ENCODE measurements at regions of chr2 and their contacts with region 1.

Region 1: GRCh38 chr2:160406591-160407392 is 86.8 kb downstream of the RBMS1 start:
- DNase-seq: peak; percentile 82
- ATAC-seq: peak; percentile 66
- H3K4me3 Mint-ChIP-seq: peak overlapping the region; percentile 89
- H3K27ac Mint-ChIP-seq: peak overlapping the region; percentile 85
- H3K4me1 Mint-ChIP-seq: peaks cover 76% of the 10 kb centered on the region
- H3K27me3 Mint-ChIP-seq: no peaks in the 10 kb centered on the region

Region 2: GRCh38 chr2:160087854-160088745 is 318.7 kb before region 1 on chr2:
- CTCF ChIA-PET with region 1: no interaction called
- POLR2A ChIA-PET with region 1: no interaction called
- DNase-seq: no peak
- ATAC-seq: no peak
- H3K4me3 Mint-ChIP-seq: no peak overlapping the region
- H3K27ac Mint-ChIP-seq: no peak overlapping the region
- H3K4me1 Mint-ChIP-seq: no peaks in the 10 kb centered on the region
- H3K27me3 Mint-ChIP-seq: no peaks in the 10 kb centered on the region

Region 3: DNA sequence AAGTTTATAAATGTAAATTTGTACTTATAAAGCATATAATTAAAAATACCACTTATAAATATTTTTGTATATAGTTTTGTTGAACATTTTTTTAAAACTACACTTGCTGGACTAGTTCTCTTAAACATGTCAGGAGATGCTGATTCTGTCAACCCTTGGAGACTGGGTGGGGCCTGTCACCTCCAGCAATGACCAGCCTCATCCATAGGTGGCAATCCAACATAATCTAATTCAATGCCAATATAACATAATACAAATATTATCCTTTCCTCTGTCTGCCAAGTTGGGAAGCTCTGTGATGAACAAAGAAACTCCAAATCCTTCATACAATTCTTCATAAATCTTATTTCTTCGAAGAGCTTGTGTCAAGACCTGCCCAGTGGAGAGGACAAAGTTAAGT is 53.6 kb before region 1 on chr2:
- CTCF ChIA-PET with region 1: interaction called, 14 read pairs
- POLR2A ChIA-PET with region 1: no interaction called
- DNase-seq: peak; percentile 47
- ATAC-seq: peak; percentile 61
- H3K4me3 Mint-ChIP-seq: no peak overlapping the region
- H3K27ac Mint-ChIP-seq: no peak overlapping the region
- H3K4me1 Mint-ChIP-seq: peaks cover 33% of the 10 kb centered on the region
- H3K27me3 Mint-ChIP-seq: no peaks in the 10 kb centered on the region

Region 4: GRCh38 chr2:160437273-160437672 is 30.5 kb after region 1 on chr2:
- CTCF ChIA-PET with region 1: no interaction called
- POLR2A ChIA-PET with region 1: no interaction called
- DNase-seq: no peak
- ATAC-seq: no peak
- H3K4me3 Mint-ChIP-seq: no peak overlapping the region
- H3K27ac Mint-ChIP-seq: no peak overlapping the region
- H3K4me1 Mint-ChIP-seq: peaks cover 24% of the 10 kb centered on the region
- H3K27me3 Mint-ChIP-seq: no peaks in the 10 kb centered on the region

Region 5: GRCh38 chr2:160541745-160542144 is 135.0 kb after region 1 on chr2:
- CTCF ChIA-PET with region 1: no interaction called
- POLR2A ChIA-PET with region 1: no interaction called
- DNase-seq: no peak
- ATAC-seq: no peak
- H3K4me3 Mint-ChIP-seq: no peak overlapping the region
- H3K27ac Mint-ChIP-seq: no peak overlapping the region
- H3K4me1 Mint-ChIP-seq: no peaks in the 10 kb centered on the region
- H3K27me3 Mint-ChIP-seq: no peaks in the 10 kb centered on the region